ENCODE measurements at regions of chr12 and their contacts with region 1.

Region 1: GRCh38 chr12:113184900-113185773 is at the starts of genes DDX54 and RITA1:
- DNase-seq: peak; percentile 85
- H3K4me3 Mint-ChIP-seq: peak within 1 kb of the TSS; percentile 92
- H3K27ac Mint-ChIP-seq: peak within 1 kb of the TSS; percentile 92
- H3K4me1 Mint-ChIP-seq: peaks cover 31% of the 10 kb centered on the region
- H3K27me3 Mint-ChIP-seq: no peaks in the 10 kb centered on the region
- total RNA-seq, gene DDX54: 121 and 133 TPM in 2 replicates
- total RNA-seq, gene RITA1: 27.1 and 31.4 TPM in 2 replicates

Region 2: GRCh38 chr12:113174461-113175384 is 10.4 kb before region 1 on chr12:
- intact Hi-C with region 1: loop called (anchors 1 kb)
- DNase-seq: peak; percentile 55
- H3K4me3 Mint-ChIP-seq: no peak overlapping the region
- H3K27ac Mint-ChIP-seq: no peak overlapping the region
- H3K4me1 Mint-ChIP-seq: peaks cover 4% of the 10 kb centered on the region
- H3K27me3 Mint-ChIP-seq: no peaks in the 10 kb centered on the region

Region 3: DNA sequence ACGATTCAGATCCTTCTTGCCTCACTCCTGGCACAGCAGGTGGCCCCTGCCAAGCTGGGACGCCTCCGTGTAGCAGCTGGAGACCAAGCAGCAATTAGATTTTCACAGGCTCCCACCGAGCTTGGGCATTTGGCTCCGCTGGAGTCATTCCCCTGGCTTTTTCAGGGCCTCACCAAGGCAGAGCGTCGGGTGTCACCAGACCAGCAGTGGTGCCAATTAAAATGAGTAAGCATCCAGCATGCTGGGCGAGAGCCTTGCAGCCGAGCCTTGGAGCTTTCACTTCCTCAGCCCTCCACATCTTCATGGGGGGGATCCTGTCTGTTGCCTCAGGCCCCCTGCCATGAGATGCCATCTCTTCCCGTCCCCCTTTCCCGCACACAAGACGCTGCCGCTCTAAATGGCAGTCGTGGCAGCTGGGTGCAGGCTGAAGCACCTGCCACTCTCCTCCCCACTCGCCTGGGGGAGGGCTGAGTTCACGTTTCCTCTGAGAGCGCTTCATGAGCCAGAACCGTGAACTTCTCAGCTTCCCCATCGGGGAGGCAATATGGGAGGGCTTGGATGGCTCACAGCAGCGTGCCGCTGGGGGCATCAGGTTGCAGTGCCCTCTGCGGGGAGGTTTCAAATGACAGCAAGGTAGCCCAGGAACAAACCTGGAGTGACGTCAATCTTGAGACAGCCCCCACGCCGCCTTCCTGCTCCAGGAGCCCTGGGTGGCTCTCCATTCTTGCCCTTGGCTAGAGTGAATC is 47.9 kb after region 1 on chr12:
- intact Hi-C with region 1: loop called (anchors 2 kb)
- DNase-seq: peak; percentile 47
- H3K4me3 Mint-ChIP-seq: peak overlapping the region; percentile 79
- H3K27ac Mint-ChIP-seq: peak overlapping the region; percentile 88
- H3K4me1 Mint-ChIP-seq: peaks cover 61% of the 10 kb centered on the region
- H3K27me3 Mint-ChIP-seq: no peaks in the 10 kb centered on the region

Region 4: DNA sequence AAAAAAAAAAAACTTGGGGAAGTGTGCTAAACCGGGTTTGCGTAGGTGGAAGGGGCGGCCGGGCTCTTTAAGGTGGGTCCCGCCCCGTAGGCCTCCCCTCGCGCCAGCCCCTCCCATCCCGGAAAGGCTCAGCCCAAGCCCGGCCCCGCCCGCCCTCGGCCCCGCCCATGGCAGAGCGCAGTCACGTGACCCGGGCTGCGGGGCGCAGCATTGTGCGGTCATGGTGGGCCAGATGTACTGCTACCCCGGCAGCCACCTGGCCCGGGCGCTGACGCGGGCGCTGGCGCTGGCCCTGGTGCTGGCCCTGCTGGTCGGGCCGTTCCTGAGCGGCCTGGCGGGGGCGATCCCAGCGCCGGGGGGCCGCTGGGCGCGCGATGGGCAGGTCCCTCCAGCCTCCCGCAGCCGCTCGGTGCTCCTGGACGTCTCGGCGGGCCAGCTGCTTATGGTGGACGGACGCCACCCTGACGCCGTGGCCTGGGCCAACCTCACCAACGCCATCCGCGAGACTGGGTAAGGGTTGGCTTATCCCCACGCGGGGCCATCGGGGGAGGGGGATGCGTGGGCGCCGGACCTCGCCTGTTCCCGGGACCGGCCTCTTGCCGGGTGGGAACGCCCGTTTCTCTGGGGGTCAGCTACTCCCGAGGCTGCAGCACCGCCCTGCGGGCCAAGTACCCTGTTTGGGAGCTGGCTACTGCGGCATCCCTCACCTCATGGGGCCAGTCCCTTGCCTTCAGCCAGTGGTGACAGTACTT is 173.4 kb after region 1 on chr12 and contains the start of gene PLBD2:
- intact Hi-C with region 1: loop called (anchors 1 kb)
- DNase-seq: peak; percentile 89
- H3K4me3 Mint-ChIP-seq: peak within 1 kb of the TSS; percentile 89
- H3K27ac Mint-ChIP-seq: peak within 1 kb of the TSS; percentile 69
- H3K4me1 Mint-ChIP-seq: peaks cover 13% of the 10 kb centered on the region
- H3K27me3 Mint-ChIP-seq: peaks cover 4% of the 10 kb centered on the region
- total RNA-seq, gene PLBD2: 15.3 and 16.3 TPM in 2 replicates

Measured in activated T-helper 1 cell treated with anti-CD3 and anti-CD28 coated beads, Interleukin-12 subunit alpha, Interleukin-12 subunit beta, Interleukin-2, Interleukin-4 antibody, amounts not matched to agents 30 ng/mL and 10 ng/mL and 1 ng/mL, durations not matched to agents 14 hours and 24 hours and 36 hours (primary cell).